Psoas muscle (tissue), 8 donors: ENCODE measurements at regions of chr2 and their contacts with region 1.

Region 1: DNA sequence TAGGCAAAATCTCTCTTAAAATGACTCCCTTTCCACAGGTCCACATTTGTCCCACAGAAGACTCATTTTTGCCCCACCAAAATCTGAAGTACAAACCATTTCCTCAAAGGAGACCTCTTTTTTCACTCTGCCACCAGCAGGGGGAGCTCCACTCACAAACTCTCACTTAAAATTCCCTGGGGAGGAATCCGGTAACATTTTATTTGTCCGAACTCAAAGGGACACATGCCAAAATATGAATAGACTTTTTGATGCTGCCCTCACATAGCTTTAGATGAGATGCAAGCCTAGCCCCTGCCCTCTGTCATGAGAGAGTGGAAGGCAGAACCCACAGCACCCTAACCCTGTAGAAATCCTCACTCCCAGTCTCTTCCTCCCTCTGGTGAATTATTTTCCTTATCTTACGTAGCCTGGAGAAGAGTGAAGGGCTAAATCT is 57.1 kb downstream of the RMDN2 start:
- DNase-seq: peak; percentile 76 to 81
- ATAC-seq: peak in 2 of 4 donors; percentile 42 to 60
- H3K4me3 ChIP-seq: peak overlapping the region; percentile 35
- H3K27ac ChIP-seq: no peak overlapping the region
- H3K4me1 ChIP-seq: no peaks in the 10 kb centered on the region
- H3K27me3 ChIP-seq: no peaks in the 10 kb centered on the region
- CTCF ChIP-seq: peak; percentile 85

Region 2: GRCh38 chr2:37912056-37912455 is 70.1 kb before region 1 on chr2:
- intact Hi-C with region 1: no loop called
- DNase-seq: no peak
- ATAC-seq: no peak
- H3K4me3 ChIP-seq: no peak overlapping the region
- H3K27ac ChIP-seq: no peak overlapping the region
- H3K4me1 ChIP-seq: peaks cover 8% of the 10 kb centered on the region
- H3K27me3 ChIP-seq: no peaks in the 10 kb centered on the region
- CTCF ChIP-seq: no peak

Region 3: GRCh38 chr2:38076606-38077430 is 94.7 kb after region 1 on chr2:
- intact Hi-C with region 1: loop called in 1 of 2 experiments (anchors 10 kb)
- DNase-seq: peak; percentile 79 to 87
- ATAC-seq: peak; percentile 54 to 75 (median 72)
- H3K4me3 ChIP-seq: peak overlapping the region; percentile 70
- H3K27ac ChIP-seq: peak overlapping the region; percentile 77
- H3K4me1 ChIP-seq: peaks cover 25% of the 10 kb centered on the region
- H3K27me3 ChIP-seq: peaks cover 0 to 34% (median 25%) of the 10 kb centered on the region in 3 donors
- CTCF ChIP-seq: peak; percentile 16

Region 4: GRCh38 chr2:38115216-38116032 is 133.3 kb after region 1 on chr2:
- intact Hi-C with region 1: loop called (anchors 2 to 5 kb)
- DNase-seq: peak; percentile 76 to 78
- ATAC-seq: peak; percentile 51 to 92 (median 70)
- H3K4me3 ChIP-seq: no peak overlapping the region
- H3K27ac ChIP-seq: no peak overlapping the region
- H3K4me1 ChIP-seq: no peaks in the 10 kb centered on the region
- H3K27me3 ChIP-seq: no peaks in the 10 kb centered on the region
- CTCF ChIP-seq: peak; percentile 86

Region 5: GRCh38 chr2:38214209-38214717 is 232.1 kb after region 1 on chr2:
- intact Hi-C with region 1: no loop called
- DNase-seq: no peak
- ATAC-seq: no peak
- H3K4me3 ChIP-seq: no peak overlapping the region
- H3K27ac ChIP-seq: no peak overlapping the region
- H3K4me1 ChIP-seq: no peaks in the 10 kb centered on the region
- H3K27me3 ChIP-seq: no peaks in the 10 kb centered on the region
- CTCF ChIP-seq: no peak

Region 6: DNA sequence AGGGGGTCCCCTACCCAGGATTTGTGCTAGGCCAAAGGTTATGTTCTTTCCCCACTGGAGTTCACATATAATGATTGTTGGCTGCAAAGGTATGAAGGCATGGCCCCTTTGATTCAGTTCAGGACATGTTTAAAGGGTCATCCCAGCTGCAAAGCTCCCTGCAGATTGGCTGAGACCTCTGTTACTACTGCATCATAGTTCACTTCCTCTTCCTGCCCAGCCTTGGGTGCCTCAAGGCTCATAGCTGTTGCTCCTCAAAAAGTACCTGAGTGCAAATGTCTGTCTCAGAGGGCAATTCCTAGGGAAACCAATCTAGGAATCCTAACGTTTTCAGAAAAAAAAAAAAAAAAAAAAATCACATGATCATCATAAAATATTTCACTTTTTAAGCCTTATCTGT is 269.8 kb after region 1 on chr2:
- intact Hi-C with region 1: no loop called
- DNase-seq: no peak
- ATAC-seq: no peak
- H3K4me3 ChIP-seq: no peak overlapping the region
- H3K27ac ChIP-seq: no peak overlapping the region
- H3K4me1 ChIP-seq: no peaks in the 10 kb centered on the region
- H3K27me3 ChIP-seq: no peaks in the 10 kb centered on the region
- CTCF ChIP-seq: no peak

Region 7: GRCh38 chr2:38264396-38265281 is 282.5 kb after region 1 on chr2:
- intact Hi-C with region 1: loop called in 1 of 2 experiments (anchors 5 kb)
- DNase-seq: no peak
- ATAC-seq: no peak
- H3K4me3 ChIP-seq: no peak overlapping the region
- H3K27ac ChIP-seq: no peak overlapping the region
- H3K4me1 ChIP-seq: no peaks in the 10 kb centered on the region
- H3K27me3 ChIP-seq: no peaks in the 10 kb centered on the region
- CTCF ChIP-seq: no peak

Region 8: DNA sequence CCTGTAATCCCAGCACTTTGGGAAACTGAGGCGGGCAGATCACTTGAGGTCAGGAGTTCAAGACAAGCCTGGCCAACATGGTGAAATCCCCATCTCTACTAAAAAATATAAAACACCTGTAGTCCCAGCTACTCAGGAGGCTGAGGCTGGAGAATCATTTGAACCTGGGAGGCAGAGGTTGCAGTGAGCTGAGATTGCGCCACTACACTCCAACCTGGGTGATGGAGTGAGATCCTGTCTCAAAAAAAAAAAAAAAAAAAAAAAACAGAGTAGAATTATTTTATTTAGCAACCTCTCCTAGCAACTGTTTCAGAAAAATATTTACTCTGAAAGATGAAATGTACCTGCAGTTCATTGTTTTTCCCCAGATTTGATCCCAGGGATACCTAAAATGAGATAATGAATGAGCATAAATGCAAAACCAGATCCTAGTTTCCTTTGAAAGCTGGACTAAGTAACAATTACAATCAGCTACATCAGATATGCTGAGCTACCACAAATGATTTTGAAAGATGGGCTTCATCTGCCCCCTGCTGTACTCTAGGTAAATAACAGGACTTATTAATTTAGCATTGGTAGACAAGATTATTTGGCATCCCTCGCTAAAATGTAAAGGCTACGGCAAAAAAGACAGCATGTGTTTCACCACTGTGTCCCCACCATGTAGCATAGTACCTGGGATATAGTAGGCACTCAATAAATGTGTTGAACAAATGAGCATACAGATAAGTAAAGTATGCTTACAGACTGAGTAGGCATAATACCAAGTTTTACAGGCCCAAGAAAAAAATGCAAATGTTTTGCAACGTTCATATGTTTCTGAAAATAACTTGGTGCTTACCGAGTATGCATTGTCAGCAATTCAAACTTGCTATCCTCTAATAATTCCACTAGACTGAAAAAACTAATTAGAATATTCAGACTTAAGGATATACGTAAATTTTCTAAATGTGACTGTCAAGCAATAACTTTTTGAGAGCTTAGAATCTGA is 292.4 kb after region 1 on chr2:
- intact Hi-C with region 1: loop called (anchors 1 to 5 kb)
- DNase-seq: no peak
- ATAC-seq: peak; percentile 71 to 84 (median 81)
- H3K4me3 ChIP-seq: no peak overlapping the region
- H3K27ac ChIP-seq: no peak overlapping the region
- H3K4me1 ChIP-seq: no peaks in the 10 kb centered on the region
- H3K27me3 ChIP-seq: no peaks in the 10 kb centered on the region
- CTCF ChIP-seq: peak; percentile 68